ENCODE measurements at regions of chr1 and their contacts with region 1.

Region 1: GRCh38 chr1:203402629-203403337 is 51.9 kb upstream of the FMOD start:
- DNase-seq: peak; percentile 90
- H3K4me3 ChIP-seq: no peak overlapping the region
- H3K27ac ChIP-seq: peak overlapping the region; percentile 95
- H3K27me3 ChIP-seq: no peaks in the 10 kb centered on the region
- CTCF ChIP-seq: no peak

Region 2: DNA sequence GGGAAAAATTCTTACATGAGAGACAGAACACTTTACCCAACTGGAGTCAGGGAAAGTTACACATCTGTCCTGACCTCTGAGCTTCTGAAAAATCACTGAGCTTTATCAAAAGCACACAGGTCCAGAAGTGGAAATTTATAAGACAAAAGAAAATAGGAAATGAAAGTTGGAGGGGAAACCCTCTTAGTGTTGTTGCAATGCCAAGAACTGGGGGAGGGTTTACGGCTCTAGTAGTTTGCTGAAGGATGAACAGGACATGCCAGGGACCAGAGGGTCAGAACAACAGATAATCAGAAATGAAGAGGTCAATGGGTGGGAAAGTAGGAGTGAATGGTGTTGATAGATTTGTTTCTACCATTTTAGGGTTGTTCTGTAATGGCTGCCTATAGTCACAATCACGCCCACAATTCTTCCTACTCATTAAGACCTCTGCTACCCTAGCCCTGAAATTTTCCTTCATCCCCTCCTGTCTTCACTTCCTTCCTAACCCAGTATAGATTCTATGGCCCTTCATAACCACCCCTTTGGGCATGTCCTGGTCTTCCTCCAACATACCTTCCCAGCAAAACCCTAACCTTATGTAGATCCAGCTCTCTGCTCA is 21.5 kb before region 1 on chr1:
- CTCF ChIA-PET with region 1: no interaction called
- POLR2A ChIA-PET with region 1: interaction called, 10 read pairs
- DNase-seq: no peak
- H3K4me3 ChIP-seq: no peak overlapping the region
- H3K27ac ChIP-seq: no peak overlapping the region
- H3K27me3 ChIP-seq: peaks cover 45% of the 10 kb centered on the region
- CTCF ChIP-seq: no peak

Region 3: GRCh38 chr1:203424861-203425662 is 22.3 kb after region 1 on chr1:
- CTCF ChIA-PET with region 1: no interaction called
- POLR2A ChIA-PET with region 1: interaction called, 24 read pairs
- DNase-seq: peak; percentile 47
- H3K4me3 ChIP-seq: no peak overlapping the region
- H3K27ac ChIP-seq: peak overlapping the region; percentile 54
- H3K27me3 ChIP-seq: peaks cover 52% of the 10 kb centered on the region
- CTCF ChIP-seq: no peak

Region 4: GRCh38 chr1:203440771-203441170 is 38.0 kb after region 1 on chr1:
- CTCF ChIA-PET with region 1: interaction called, 5 read pairs
- POLR2A ChIA-PET with region 1: interaction called, 12 read pairs
- DNase-seq: peak; percentile 37
- H3K4me3 ChIP-seq: no peak overlapping the region
- H3K27ac ChIP-seq: no peak overlapping the region
- H3K27me3 ChIP-seq: peaks cover 44% of the 10 kb centered on the region
- CTCF ChIP-seq: peak; percentile 70

Region 5: GRCh38 chr1:203454986-203455471 is 52.2 kb after region 1 on chr1:
- CTCF ChIA-PET with region 1: no interaction called
- POLR2A ChIA-PET with region 1: no interaction called
- DNase-seq: no peak
- H3K4me3 ChIP-seq: no peak overlapping the region
- H3K27ac ChIP-seq: no peak overlapping the region
- H3K27me3 ChIP-seq: peaks cover 30% of the 10 kb centered on the region
- CTCF ChIP-seq: no peak

Region 6: GRCh38 chr1:203625628-203626019 is 222.8 kb after region 1 on chr1:
- CTCF ChIA-PET with region 1: no interaction called
- POLR2A ChIA-PET with region 1: no interaction called
- DNase-seq: no peak
- H3K4me3 ChIP-seq: no peak overlapping the region
- H3K27ac ChIP-seq: no peak overlapping the region
- H3K27me3 ChIP-seq: no peaks in the 10 kb centered on the region
- CTCF ChIP-seq: no peak